Activated CD4-positive, alpha-beta memory T cell treated with anti-CD3 and anti-CD28 coated beads for 36 hours (primary cell): ENCODE measurements at regions of chr21 and their contacts with region 1.

Region 1: GRCh38 chr21:35428489-35428888 is 379.4 kb upstream of the RUNX1 start:
- DNase-seq: peak; percentile 46
- H3K4me3 Mint-ChIP-seq: peak overlapping the region; percentile 46
- H3K27ac Mint-ChIP-seq: peak overlapping the region; percentile 56
- H3K4me1 Mint-ChIP-seq: peaks cover 34% of the 10 kb centered on the region
- H3K27me3 Mint-ChIP-seq: peaks cover 21% of the 10 kb centered on the region

Region 2: GRCh38 chr21:35375115-35375514 is 53.4 kb before region 1 on chr21:
- CTCF ChIA-PET with region 1: no interaction called
- POLR2A ChIA-PET with region 1: no interaction called
- intact Hi-C with region 1: no loop called
- DNase-seq: no peak
- H3K4me3 Mint-ChIP-seq: no peak overlapping the region
- H3K27ac Mint-ChIP-seq: no peak overlapping the region
- H3K4me1 Mint-ChIP-seq: no peaks in the 10 kb centered on the region
- H3K27me3 Mint-ChIP-seq: peaks cover 2% of the 10 kb centered on the region

Region 3: DNA sequence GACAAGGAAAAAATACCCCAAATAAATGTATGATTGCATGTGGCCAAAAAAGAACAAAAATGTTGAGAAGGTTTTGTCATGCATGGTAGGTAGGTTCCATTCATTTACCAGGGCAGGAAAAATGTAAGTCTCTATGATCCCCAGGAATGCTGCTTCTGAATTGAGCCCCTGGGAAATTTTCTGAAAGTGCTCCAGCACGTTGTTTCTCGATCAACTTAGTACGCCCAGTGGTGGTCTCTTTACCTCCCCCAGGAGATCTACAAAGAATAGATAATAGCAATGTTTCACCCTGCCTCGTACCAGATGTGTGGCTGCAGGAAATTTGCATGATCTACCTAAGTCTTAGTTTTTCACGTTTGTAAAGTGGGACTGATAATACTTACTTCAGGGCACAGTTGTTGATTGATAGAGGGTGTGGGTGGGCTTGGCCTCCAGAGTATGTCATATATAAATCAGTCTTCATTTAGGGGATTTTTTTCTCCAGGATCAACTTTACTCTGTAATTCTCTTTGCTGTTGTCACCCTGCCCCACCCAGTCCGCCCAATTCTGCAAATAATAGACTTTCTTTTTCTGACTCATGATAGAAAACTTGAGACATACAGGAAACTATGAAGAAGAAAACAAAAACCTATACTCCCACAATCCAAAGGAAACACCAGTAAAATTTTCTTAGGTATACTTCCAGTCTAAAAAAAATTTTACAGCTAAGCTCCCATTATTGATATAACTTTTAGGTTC is 82.6 kb after region 1 on chr21:
- CTCF ChIA-PET with region 1: no interaction called
- POLR2A ChIA-PET with region 1: no interaction called
- intact Hi-C with region 1: loop called (anchors 5 kb)
- DNase-seq: peak; percentile 40
- H3K4me3 Mint-ChIP-seq: no peak overlapping the region
- H3K27ac Mint-ChIP-seq: no peak overlapping the region
- H3K4me1 Mint-ChIP-seq: peaks cover 22% of the 10 kb centered on the region
- H3K27me3 Mint-ChIP-seq: peaks cover 8% of the 10 kb centered on the region

Region 4: GRCh38 chr21:35616090-35616489 is 187.6 kb after region 1 on chr21:
- CTCF ChIA-PET with region 1: no interaction called
- POLR2A ChIA-PET with region 1: no interaction called
- intact Hi-C with region 1: loop called (anchors 10 kb)
- DNase-seq: no peak
- H3K4me3 Mint-ChIP-seq: no peak overlapping the region
- H3K27ac Mint-ChIP-seq: no peak overlapping the region
- H3K4me1 Mint-ChIP-seq: no peaks in the 10 kb centered on the region
- H3K27me3 Mint-ChIP-seq: peaks cover 12% of the 10 kb centered on the region

Region 5: DNA sequence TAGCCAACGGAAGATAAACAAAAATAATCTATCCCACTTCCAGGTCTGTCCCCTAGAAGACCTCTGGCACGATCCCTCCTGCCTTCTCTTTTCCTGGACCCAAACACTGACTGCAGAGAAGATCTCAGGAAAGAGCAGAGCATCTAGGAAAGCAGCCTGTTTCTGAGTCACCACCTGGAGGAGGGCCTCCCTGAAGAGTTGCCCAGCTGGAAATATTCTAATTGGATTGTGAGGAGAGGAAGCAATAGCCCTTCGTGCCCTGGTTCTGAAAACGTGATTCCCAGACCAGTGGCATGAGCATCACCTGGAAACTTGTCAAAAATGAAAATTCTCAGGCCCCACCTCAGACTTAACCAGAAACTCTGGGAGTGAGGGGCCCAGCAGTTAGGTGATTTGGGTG is 220.7 kb after region 1 on chr21:
- CTCF ChIA-PET with region 1: no interaction called
- POLR2A ChIA-PET with region 1: no interaction called
- intact Hi-C with region 1: no loop called
- DNase-seq: no peak
- H3K4me3 Mint-ChIP-seq: no peak overlapping the region
- H3K27ac Mint-ChIP-seq: no peak overlapping the region
- H3K4me1 Mint-ChIP-seq: no peaks in the 10 kb centered on the region
- H3K27me3 Mint-ChIP-seq: peaks cover 22% of the 10 kb centered on the region